Dendritic cell treated with granulocyte-macrophage colony-stimulating factor and Interleukin-4, amounts not matched to agents 40 ng/mL and 50 ng/mL, for 4 days (primary cell): ENCODE measurements at regions of chr11 and their contacts with region 1.

Region 1: GRCh38 chr11:63490551-63491239 is at the start of gene PLAAT5:
- H3K4me3 Mint-ChIP-seq: peak within 1 kb of the TSS; percentile 78
- H3K27ac Mint-ChIP-seq: no peak within 1 kb of the TSS
- H3K4me1 Mint-ChIP-seq: peaks cover 34% of the 10 kb centered on the region
- H3K27me3 Mint-ChIP-seq: peaks cover 42% of the 10 kb centered on the region

Region 2: DNA sequence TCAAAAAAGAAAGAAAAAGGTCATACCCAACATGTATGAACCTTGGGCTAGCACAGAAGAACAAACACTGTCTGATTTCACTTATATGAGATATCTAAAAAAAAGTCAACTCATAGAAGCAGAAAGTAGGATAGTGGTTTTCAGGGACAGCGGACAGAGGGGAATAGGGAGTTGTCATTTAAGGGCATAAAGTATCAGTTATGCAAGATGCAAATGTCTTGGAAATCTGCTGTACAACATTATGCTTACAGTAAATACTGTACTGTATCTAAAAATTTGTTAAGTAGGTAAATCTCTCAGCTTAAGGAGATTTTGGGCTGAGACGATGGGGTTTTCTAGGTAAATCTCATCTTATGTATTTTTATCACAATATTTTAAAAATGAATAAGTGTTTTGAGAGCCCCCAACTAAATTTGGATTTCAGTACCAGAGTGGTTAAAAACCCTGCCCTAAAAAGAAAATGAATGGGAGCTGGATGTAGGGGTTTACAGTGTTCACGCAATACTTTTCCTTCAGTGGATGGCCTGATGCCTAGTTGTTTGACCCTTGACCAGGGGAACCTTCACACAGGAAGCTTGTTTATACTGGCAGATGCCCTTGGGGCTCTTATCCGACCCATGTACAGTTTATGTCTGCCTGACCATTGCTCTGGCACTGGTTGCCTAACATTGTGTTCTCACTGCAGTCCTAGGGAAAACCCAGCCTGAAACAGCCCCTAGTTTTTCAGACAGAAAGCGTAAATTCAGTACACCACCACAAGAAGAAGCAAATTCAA is 86.3 kb before region 1 on chr11:
- intact Hi-C with region 1: no loop called
- H3K4me3 Mint-ChIP-seq: no peak overlapping the region
- H3K27ac Mint-ChIP-seq: no peak overlapping the region
- H3K4me1 Mint-ChIP-seq: no peaks in the 10 kb centered on the region
- H3K27me3 Mint-ChIP-seq: peaks cover 20% of the 10 kb centered on the region

Region 3: DNA sequence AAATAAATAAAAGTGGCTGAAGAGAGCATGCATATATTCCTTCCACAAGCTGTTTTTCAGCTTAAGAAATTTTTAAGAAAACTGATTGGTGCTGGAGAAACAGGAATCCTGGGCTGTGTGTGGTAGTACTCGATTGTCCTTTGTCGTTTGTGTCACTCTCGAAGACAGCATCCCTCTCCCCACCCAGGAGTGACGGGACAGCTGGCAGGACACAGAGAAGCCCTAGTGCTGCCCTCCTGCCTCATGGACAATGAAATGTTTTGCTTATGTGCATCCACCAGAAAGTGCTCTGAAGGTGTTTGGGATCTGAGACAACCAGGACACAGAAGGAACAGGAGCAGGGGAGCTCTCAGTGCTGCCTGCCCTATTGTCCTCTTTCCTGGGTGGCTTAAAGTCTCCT is 58.7 kb after region 1 on chr11:
- intact Hi-C with region 1: loop called (anchors 10 kb)
- H3K4me3 Mint-ChIP-seq: no peak overlapping the region
- H3K27ac Mint-ChIP-seq: no peak overlapping the region
- H3K4me1 Mint-ChIP-seq: peaks cover 20% of the 10 kb centered on the region
- H3K27me3 Mint-ChIP-seq: peaks cover 31% of the 10 kb centered on the region